Astrocyte of the cerebellum (primary cell): ENCODE measurements at regions of chr15 and their contacts with region 1.

Region 1: GRCh38 chr15:52256366-52256765 is 39.2 kb downstream of the MYO5C start:
- DNase-seq: peak; percentile 72
- H3K4me3 ChIP-seq: no peak overlapping the region
- CTCF ChIP-seq: peak; percentile 70

Region 2: DNA sequence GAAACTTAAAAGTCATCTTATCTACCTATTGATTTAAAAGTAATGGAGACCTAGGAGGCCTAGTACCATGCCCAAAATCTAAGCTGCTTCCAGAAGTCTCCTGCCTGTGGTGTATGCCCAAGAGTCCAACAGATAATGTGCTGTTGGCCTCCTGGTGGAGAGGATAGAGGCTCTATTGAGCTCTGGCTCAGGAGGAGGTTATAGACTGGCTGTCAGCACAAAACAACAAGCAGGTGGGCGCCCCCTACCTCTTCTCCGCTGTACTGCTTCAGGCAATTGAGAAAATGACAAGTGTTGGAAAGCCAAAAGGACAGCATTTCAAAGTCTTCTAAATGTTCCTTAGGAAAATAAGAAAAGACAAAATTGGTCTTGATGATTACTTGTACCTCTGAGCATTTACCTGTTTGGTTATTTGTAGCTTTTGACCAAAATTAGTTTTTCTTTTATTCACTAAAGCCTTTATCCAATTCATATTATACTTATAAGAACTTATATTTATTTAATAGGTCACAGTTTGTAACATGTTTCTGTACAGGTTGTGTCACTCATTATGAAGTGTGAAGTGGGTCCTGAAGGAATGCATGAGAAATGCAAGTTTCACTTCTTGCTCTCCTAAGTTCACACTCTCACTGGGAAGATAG is 47.9 kb before region 1 on chr15:
- in situ Hi-C with region 1: no loop called
- DNase-seq: peak; percentile 20
- H3K4me3 ChIP-seq: no peak overlapping the region
- CTCF ChIP-seq: peak; percentile 79

Region 3: GRCh38 chr15:52735231-52736089 is 479.1 kb after region 1 on chr15:
- in situ Hi-C with region 1: loop called (anchors 5 kb)
- DNase-seq: peak; percentile 64
- H3K4me3 ChIP-seq: no peak overlapping the region
- CTCF ChIP-seq: peak; percentile 64